PC-9 (cell line): ENCODE measurements at regions of chr3 and their contacts with region 1.

Region 1: GRCh38 chr3:129399145-129399894 is 29.1 kb downstream of the EFCAB12 start:
- DNase-seq: peak; percentile 81 to 88
- H3K4me3 ChIP-seq: peak overlapping the region; percentile 81
- H3K27ac ChIP-seq: peak overlapping the region; percentile 56
- H3K4me1 ChIP-seq: peaks cover 9% of the 10 kb centered on the region
- H3K27me3 ChIP-seq: no peaks in the 10 kb centered on the region
- CTCF ChIP-seq: peak; percentile 54

Region 2: DNA sequence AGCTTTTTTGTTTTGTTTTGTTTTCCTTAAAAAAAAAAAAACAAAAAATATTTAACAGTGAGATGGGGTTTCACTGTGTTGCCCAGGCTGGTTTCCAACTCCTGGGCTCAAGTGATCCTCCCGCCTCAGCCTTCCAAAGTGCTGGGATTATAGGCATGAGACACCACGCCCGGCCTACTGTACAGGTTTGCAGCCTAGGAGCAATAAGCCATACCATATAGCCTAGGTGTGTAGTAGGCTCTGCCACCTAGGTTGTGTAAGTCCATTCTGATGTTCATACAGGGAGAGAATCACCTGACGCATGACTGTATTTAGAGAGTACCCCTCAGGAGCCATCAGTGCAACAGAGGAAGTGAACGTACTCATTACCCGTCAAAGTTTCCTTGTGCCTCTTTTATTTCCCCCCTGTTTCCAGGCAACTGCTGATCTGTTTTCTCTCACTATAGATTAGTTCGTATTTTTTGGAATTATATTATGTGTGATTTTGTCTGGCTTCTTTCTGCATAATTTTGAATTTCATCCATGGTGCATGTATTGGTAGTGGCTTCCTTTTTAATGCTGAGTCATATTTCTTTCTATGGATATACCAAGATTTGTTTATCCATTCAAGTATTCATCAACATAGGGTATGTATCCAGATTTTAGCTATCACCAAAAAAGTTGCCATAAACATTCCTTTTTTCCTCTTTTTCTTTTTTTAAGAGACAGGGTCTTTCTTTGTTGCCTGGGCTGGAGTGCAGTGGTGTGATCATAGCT is 510.0 kb before region 1 on chr3:
- CTCF ChIA-PET with region 1: no interaction called
- POLR2A ChIA-PET with region 1: interaction called, 16 read pairs
- intact Hi-C with region 1: no loop called
- DNase-seq: no peak
- H3K4me3 ChIP-seq: no peak overlapping the region
- H3K27ac ChIP-seq: no peak overlapping the region
- H3K4me1 ChIP-seq: no peaks in the 10 kb centered on the region
- H3K27me3 ChIP-seq: no peaks in the 10 kb centered on the region
- CTCF ChIP-seq: no peak

Region 3: GRCh38 chr3:129424185-129424841 is 25.0 kb after region 1 on chr3:
- CTCF ChIA-PET with region 1: interaction called, 9 read pairs
- POLR2A ChIA-PET with region 1: interaction called, 12 read pairs
- intact Hi-C with region 1: no loop called
- DNase-seq: no peak
- H3K4me3 ChIP-seq: no peak overlapping the region
- H3K27ac ChIP-seq: no peak overlapping the region
- H3K4me1 ChIP-seq: peaks cover 12% of the 10 kb centered on the region; the same call in 1 of the 2 replicates
- H3K27me3 ChIP-seq: no peaks in the 10 kb centered on the region
- CTCF ChIP-seq: no peak

Region 4: GRCh38 chr3:129439817-129440617 is 40.7 kb after region 1 on chr3 and contains the starts of genes IFT122 and MBD4:
- CTCF ChIA-PET with region 1: no interaction called
- POLR2A ChIA-PET with region 1: no interaction called
- intact Hi-C with region 1: loop called (anchors 5 kb)
- DNase-seq: peak; percentile 97 to 99
- H3K4me3 ChIP-seq: peak within 1 kb of the TSS; percentile 79
- H3K27ac ChIP-seq: peak within 1 kb of the TSS; percentile 62
- H3K4me1 ChIP-seq: peaks cover 38% of the 10 kb centered on the region
- H3K27me3 ChIP-seq: no peaks in the 10 kb centered on the region
- CTCF ChIP-seq: no peak
- total RNA-seq, gene IFT122: 44.8 and 55.6 TPM in 2 replicates
- total RNA-seq, gene MBD4: 48.6 and 49.4 TPM in 2 replicates